ENCODE measurements at regions of chr19 and their contacts with region 1.

Region 1: GRCh38 chr19:4576016-4576933 is 16.8 kb upstream of the SEMA6B start:
- DNase-seq: peak in 1 of 2 experiments; percentile 90
- H3K4me3 ChIP-seq: no peak overlapping the region
- H3K4me1 ChIP-seq: peaks cover 11% of the 10 kb centered on the region
- H3K27me3 ChIP-seq: no peaks in the 10 kb centered on the region

Region 2: DNA sequence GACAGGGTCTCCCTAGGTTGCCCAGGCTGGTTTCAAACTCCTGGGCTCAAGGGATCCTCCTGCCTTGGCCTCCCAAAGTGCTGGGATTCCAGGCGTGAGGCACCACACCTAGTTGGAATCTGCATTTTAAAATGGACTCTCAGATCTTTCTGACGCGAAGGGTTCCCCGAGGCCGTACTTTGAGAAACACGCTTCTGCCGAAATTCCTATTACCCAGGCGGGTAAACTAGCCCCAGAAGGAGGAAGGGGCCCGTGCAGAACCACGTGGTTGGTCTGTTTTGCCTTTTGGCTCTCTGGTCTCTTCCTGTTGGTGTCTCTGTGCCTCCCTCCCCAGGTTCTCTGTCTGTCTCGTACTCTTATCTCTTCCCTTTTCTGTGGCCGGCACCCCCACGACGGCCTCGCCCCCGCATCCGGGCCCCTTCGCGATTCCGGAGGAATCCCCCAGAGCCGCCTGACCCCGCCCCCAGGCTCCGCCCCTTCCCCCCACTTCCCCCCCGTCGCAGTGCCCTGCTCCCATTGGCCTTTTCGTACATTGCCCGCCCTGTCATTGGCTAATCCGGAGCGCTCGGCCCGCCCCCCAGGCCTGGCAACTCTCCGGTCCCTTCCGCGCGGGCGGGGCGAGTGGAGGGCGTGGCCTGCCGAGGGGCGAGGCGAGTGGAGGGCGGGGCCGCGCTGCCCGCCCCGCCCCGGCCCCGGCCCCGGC is 62.7 kb after region 1 on chr19 and contains the start of gene TNFAIP8L1:
- in situ Hi-C with region 1: loop called (anchors 5 kb)
- DNase-seq: peak; percentile 90 to 99
- H3K4me3 ChIP-seq: peak within 1 kb of the TSS; percentile 71
- H3K4me1 ChIP-seq: peaks cover 6% of the 10 kb centered on the region
- H3K27me3 ChIP-seq: no peaks in the 10 kb centered on the region

Measured in HAP-1 (cell line).